SK-N-SH (cell line): ENCODE measurements at regions of chr17 and their contacts with region 1.

Region 1: DNA sequence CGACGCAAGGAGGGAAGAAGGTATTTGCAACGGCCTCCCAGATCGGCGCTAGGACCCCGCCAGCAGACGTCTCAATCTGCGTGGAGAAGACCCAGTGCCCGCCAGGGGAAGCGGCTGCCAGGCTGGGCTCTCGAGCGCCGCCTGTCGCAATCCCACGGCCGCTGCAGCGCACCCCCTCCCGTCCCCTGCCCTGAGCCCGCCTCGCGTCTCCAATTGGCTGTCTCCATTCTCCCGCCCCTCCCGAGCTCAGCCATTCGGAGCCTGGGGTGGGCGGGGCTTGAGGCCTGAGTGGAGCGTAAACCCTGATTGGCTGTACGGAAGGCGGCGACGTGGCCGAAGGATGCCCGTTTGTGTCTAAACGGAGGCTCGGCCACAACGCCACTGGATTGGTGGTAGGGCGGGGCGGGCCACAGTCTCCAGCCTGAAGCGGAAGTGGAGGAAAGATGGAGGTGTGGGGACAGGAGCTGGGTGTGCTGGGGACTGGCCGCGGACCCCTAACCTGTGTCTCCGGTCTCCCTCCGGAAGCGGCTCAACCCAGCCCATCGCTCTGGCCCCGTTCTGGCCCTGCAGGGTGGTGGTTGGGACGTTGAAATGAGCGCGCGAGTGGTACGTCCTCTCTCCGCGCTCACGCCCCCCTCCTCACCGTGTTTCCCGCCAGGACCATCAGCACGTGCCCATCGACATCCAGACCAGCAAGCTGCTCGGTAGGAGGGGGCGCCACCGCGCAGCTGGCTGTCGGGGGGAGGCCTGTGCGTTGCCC is at the start of gene CDK5RAP3:
- DNase-seq: peak; percentile 99
- H3K4me3 ChIP-seq: peak within 1 kb of the TSS; percentile 79 to 90
- H3K27ac ChIP-seq: peak within 1 kb of the TSS; percentile 54 to 83
- H3K4me1 ChIP-seq: peaks cover 20 to 25% of the 10 kb centered on the region in 2 experiments; a peak in 3 of 4 replicates
- H3K27me3 ChIP-seq: no peaks in the 10 kb centered on the region
- CTCF ChIP-seq: peak; percentile 99
- EP300 ChIP-seq: no peak; a peak in 1 of 4 replicates
- RAD21 ChIP-seq: peak; percentile 69
- polyA plus RNA-seq, gene CDK5RAP3: 208 and 288 TPM in 2 replicates

Region 2: DNA sequence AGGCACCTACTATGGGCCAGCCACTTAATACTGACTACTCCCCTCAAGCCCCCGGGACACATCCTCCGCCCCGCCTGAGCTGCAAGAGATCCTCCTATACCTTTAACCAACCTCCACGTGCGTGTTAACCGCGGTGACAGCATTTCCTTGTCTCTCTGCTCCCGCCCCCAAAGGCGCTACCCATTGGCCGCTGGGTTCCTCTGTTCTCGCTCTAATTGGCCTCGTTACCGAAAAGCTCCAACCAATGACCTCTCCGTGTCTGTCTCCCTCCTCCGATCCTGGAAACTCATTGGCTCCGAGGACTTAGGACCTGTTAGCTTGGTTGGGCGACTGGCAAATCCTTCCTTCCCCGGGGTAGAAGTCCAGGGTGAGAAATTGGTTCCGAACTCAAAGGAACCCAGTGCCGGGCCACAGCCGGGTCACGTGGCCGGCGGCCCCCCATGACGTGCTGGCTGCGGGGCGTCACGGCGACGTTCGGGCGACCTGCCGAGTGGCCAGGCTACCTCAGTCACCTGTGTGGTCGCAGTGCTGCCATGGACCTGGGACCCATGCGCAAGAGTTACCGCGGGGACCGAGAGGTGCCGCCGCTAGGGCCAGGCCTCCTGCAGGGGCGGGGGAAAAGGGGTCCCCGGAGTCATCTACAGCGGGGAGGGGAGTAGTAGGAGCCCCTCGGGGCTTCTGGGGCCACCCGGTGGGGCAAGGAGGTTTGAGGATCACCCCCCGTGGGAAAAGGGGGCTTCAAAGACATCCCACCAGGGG is 29.5 kb before region 1 on chr17 and contains the start of gene PNPO:
- CTCF ChIA-PET with region 1: interaction called, 1,216 read pairs
- POLR2A ChIA-PET with region 1: interaction called, 8 read pairs
- DNase-seq: peak; percentile 98
- H3K4me3 ChIP-seq: peak within 1 kb of the TSS; percentile 76 to 78
- H3K27ac ChIP-seq: peak within 1 kb of the TSS in 1 of 2 experiments; percentile 73; a peak in 3 of 4 replicates
- H3K4me1 ChIP-seq: peaks cover 6 to 17% of the 10 kb centered on the region in 2 experiments; a peak in 3 of 4 replicates
- H3K27me3 ChIP-seq: no peaks in the 10 kb centered on the region
- CTCF ChIP-seq: no peak; the same call in 1 of the 2 replicates
- EP300 ChIP-seq: peak in 1 of 2 experiments; percentile 54; a peak in 1 of 4 replicates
- RAD21 ChIP-seq: no peak
- polyA plus RNA-seq, gene PNPO: 26.1 and 33.8 TPM in 2 replicates

Region 3: DNA sequence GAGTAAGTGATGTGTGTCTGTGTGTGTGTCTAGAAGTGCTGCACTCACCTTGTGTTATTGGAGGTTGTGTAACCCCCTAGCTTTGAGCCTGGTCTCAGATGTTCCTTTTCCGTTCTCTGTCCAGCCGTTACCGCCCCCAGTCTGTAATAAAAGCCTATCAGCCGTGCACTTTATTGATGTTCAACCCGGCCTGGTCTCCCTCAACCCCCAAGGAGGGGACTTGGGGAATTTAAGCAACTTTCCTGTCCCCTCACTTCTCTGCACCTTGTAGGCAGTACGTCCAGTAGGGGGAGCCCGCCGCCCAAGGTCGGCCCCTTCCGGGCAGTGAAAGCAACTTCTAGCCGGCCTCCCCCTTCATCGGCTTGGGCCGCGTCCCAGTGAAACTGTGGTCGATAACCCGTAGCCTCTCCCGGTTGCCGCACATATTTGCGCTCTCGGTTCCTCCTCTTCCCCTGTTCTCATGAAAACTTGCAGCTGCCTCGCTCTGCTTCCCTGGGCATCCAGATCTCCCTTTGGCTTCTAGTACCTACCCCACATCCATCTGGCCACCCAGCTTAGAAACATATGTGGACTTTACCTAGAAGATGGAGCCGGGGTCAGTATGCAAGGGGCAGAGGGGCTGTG is 21.6 kb before region 1 on chr17:
- CTCF ChIA-PET with region 1: interaction called, 1,216 read pairs
- POLR2A ChIA-PET with region 1: interaction called, 11 read pairs
- DNase-seq: peak; percentile 90
- H3K4me3 ChIP-seq: peak overlapping the region; percentile 28 to 29
- H3K27ac ChIP-seq: peak overlapping the region; percentile 29 to 75; a peak in 3 of 4 replicates
- H3K4me1 ChIP-seq: peaks cover 4 to 11% of the 10 kb centered on the region in 2 experiments; a peak in 3 of 4 replicates
- H3K27me3 ChIP-seq: no peaks in the 10 kb centered on the region
- CTCF ChIP-seq: peak; percentile 100
- EP300 ChIP-seq: no peak
- RAD21 ChIP-seq: peak; percentile 91

Region 4: DNA sequence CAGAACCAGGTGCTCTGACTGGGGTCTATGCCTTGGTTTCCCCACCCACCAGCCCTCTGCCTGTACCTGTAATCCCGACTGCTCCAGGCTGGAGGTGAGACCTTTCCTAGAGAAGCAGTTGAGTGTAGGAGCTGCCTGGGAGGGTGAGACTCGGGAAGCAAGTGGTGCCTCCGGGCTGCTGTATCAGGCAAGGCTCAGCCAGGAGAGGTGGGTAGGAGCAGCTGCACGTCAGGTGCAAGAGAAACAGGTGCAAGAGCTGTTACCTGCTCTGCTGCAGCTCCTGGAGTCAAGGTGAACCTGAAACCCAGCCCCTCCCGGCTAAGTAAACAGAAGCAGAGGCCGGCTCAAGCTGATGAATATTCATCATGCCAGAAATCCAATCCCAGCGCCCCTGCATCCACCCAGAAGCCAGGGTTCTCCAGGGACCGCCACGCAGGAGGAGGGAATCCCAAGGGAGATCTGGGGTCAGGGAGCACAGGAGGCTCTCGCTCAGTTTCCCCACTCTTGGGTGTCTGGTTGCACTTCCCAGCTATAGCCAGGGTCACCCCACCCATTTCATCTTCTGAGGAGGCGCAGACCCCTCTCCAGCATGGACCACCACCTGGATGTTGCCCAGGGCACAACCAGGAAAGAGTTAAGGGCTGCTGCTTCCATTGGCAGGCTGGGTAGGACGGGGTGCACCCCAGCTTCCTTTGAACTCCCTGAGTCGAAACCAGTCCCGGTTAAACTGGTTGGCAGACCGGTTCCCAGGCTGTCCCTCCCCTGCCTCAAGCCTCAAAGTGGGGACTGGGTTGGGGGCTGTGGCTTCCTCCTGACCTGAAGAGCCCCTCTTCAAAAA is 13.1 kb before region 1 on chr17 and contains the start of gene PRR15L:
- CTCF ChIA-PET with region 1: interaction called, 1,216 read pairs
- POLR2A ChIA-PET with region 1: interaction called, 4 read pairs
- DNase-seq: no peak
- H3K4me3 ChIP-seq: no peak within 1 kb of the TSS
- H3K27ac ChIP-seq: no peak within 1 kb of the TSS
- H3K4me1 ChIP-seq: peaks cover 0 to 10% of the 10 kb centered on the region in 2 experiments; a peak in 3 of 4 replicates
- H3K27me3 ChIP-seq: no peaks in the 10 kb centered on the region
- CTCF ChIP-seq: no peak
- EP300 ChIP-seq: no peak
- RAD21 ChIP-seq: no peak
- polyA plus RNA-seq, gene PRR15L: not detected in 2 replicates

Region 5: GRCh38 chr17:47987240-47987835 is 16.5 kb after region 1 on chr17:
- CTCF ChIA-PET with region 1: interaction called, 19 read pairs
- POLR2A ChIA-PET with region 1: interaction called, 6 read pairs
- DNase-seq: peak; percentile 87
- H3K4me3 ChIP-seq: no peak overlapping the region
- H3K27ac ChIP-seq: peak overlapping the region in 1 of 2 experiments; percentile 92; a peak in 2 of 4 replicates
- H3K4me1 ChIP-seq: peaks cover 13 to 61% of the 10 kb centered on the region in 2 experiments
- H3K27me3 ChIP-seq: no peaks in the 10 kb centered on the region
- CTCF ChIP-seq: no peak
- EP300 ChIP-seq: peak in 1 of 2 experiments; percentile 85; a peak in 2 of 4 replicates
- RAD21 ChIP-seq: peak; percentile 48

Region 6: GRCh38 chr17:48002266-48002915 is 31.5 kb after region 1 on chr17:
- CTCF ChIA-PET with region 1: interaction called, 20 read pairs
- POLR2A ChIA-PET with region 1: interaction called, 10 read pairs
- DNase-seq: no peak
- H3K4me3 ChIP-seq: peak overlapping the region in 1 of 2 experiments; percentile 43; a peak in 2 of 4 replicates
- H3K27ac ChIP-seq: peak overlapping the region; percentile 99 to 100
- H3K4me1 ChIP-seq: peaks cover 61 to 65% of the 10 kb centered on the region in 2 experiments
- H3K27me3 ChIP-seq: no peaks in the 10 kb centered on the region
- CTCF ChIP-seq: no peak
- EP300 ChIP-seq: no peak
- RAD21 ChIP-seq: no peak